ENCODE measurements at regions of chr3 and their contacts with region 1.

Region 1: DNA sequence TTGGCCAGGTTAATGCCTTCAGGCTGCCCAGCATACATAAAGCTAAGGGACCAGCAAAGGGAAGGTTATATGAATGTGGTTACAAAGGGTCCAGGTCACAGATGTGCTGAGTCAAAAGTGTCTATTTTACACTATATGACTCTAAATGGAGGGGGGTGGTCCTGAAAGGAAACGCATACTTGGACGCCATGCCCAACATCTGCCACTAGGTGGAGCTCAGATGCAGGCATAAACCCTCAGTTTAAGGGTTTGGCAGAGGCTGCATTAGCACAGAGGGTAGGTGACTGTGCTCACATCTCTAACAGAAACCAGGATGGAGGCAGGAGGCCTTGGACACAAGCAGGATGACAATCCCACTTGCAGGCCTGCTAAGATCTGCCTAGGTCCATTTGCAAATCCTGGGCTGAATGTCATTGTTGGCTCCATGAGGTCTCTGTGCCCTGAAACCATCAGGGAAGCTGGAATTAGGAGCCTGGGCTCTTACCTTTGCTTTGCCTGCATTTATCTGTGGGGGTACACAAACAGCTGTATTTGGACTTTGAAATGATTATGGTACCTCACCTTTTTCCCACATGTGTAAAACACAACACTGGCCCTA is 55.8 kb downstream of the ZNF621 start:
- DNase-seq: no peak
- H3K4me3 ChIP-seq: no peak overlapping the region
- H3K27ac ChIP-seq: no peak overlapping the region
- H3K4me1 ChIP-seq: peaks cover 0 to 22% (median 4%) of the 10 kb centered on the region in 3 donors
- H3K27me3 ChIP-seq: no peaks in the 10 kb centered on the region
- CTCF ChIP-seq: peak; percentile 80 to 91 (median 88)
- POLR2A ChIP-seq: no peak

Region 2: DNA sequence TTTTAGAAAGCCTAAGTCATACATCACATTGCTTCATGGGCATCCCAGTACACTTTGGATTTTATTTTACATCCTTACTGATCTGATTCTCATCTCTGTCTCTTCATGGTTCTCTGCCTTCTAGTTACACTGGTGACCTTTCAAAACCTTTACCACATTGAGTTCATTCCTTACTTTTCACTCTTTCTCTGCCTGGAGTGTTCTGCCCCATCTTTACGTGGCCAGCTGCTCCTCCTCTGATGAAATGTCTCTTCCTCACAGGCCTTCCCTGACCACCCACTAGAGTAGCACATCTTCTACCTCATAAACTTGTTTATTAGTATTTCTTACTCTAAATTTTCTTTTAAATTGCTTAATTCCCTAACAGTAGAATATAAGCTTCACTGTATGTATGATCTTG is 636.4 kb after region 1 on chr3:
- intact Hi-C with region 1: loop called (anchors 10 kb)
- DNase-seq: no peak
- H3K4me3 ChIP-seq: no peak overlapping the region
- H3K27ac ChIP-seq: no peak overlapping the region
- H3K4me1 ChIP-seq: peaks cover 3 to 98% (median 34%) of the 10 kb centered on the region in 3 donors
- H3K27me3 ChIP-seq: no peaks in the 10 kb centered on the region
- CTCF ChIP-seq: no peak
- POLR2A ChIP-seq: no peak